Ascending aorta (tissue), 2 donors: ENCODE measurements at regions of chr14 and their contacts with region 1.

Region 1: DNA sequence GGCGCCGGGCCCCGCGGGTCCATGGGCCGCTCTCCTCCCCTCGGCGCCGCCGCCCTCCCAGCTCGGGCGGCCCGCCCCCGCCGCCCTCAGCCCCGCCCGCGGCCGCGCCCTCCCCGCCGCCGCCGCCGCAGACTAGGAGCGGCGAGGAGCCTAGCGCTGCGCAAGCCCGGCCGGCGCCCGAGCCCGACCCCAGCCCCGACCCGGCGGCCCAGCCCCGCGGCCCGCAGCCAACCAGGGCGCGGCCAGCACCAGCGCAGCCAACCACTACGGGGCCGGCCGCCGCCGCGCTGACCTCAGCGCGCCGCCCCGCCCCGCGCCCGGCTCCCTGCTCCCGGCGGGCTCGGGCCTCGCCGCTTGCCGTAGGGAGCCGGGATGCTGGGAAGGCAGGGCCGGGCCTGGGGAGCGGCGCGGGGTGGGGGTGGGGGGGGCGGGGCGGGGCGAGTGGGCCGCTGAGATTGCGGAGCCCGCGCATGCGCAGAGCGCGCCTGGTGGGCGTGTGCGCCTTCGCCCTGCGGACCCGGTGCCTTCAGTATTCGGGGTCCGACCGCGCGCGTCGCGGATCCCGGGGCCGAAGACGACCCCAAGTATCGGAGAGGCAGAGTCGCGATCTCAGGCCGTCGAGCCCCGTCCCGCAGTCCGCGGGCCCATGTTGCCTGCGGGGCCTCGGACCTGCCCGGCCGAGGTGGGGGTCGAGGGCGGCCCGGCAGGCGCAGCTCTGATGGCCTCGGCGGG is at the start of gene CDC42BPB:
- DNase-seq: peak; percentile 38 to 93
- H3K4me3 ChIP-seq: peak within 1 kb of the TSS; percentile 75 to 98
- H3K27ac ChIP-seq: peak within 1 kb of the TSS; percentile 92 to 93
- H3K4me1 ChIP-seq: peaks cover 6 to 20% of the 10 kb centered on the region in 2 donors
- H3K27me3 ChIP-seq: no peaks in the 10 kb centered on the region
- CTCF ChIP-seq: no peak
- total RNA-seq, gene CDC42BPB: 96.5 TPM

Region 2: GRCh38 chr14:102474934-102475333 is 582.6 kb before region 1 on chr14:
- intact Hi-C with region 1: no loop called
- DNase-seq: no peak
- H3K4me3 ChIP-seq: no peak overlapping the region
- H3K27ac ChIP-seq: no peak overlapping the region
- H3K4me1 ChIP-seq: peaks cover 0 to 3% of the 10 kb centered on the region in 2 donors
- H3K27me3 ChIP-seq: no peaks in the 10 kb centered on the region
- CTCF ChIP-seq: no peak

Region 3: GRCh38 chr14:102591889-102592763 is 465.4 kb before region 1 on chr14 and contains the start of gene RCOR1:
- intact Hi-C with region 1: loop called (anchors 5 kb)
- DNase-seq: peak; percentile 93 to 99
- H3K4me3 ChIP-seq: peak within 1 kb of the TSS; percentile 68 to 83
- H3K27ac ChIP-seq: peak within 1 kb of the TSS; percentile 94 to 98
- H3K4me1 ChIP-seq: peaks cover 8 to 12% of the 10 kb centered on the region in 2 donors
- H3K27me3 ChIP-seq: no peaks in the 10 kb centered on the region
- CTCF ChIP-seq: no peak
- total RNA-seq, gene RCOR1: 4.7 TPM

Region 4: DNA sequence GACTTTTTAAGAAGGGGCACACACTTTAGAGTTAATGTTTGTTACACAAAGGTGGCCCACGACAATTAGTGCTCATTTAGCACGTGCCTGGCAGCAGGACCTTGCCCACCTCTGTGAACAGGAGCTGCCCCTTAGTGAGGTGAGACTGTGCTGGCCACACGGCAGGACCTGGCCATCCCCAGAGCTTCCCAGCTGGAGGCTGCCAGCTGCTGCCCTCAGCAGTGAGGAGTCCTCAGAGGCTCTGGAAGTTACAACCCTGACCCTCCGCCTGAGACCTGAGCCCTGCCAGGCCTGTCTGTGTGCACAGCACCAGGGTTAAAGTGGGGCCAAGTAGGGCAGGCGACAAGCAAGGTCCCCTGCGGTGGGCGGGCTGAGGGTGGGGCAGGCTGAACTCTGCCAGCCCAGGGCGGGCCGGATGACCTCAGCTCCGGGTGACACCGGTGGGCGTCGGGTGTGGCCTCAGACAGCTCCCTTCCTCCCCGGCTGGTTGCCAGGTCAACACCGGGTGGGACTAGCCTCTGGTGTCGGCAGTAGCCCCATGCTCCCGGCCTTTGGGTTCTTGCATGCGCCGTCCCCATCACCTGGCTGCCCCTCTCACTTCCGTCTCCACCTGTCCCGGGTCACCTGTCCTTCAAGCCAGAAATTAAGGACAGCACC is 17.3 kb after region 1 on chr14:
- intact Hi-C with region 1: loop called (anchors 1 kb)
- DNase-seq: peak in 1 of 2 donors; percentile 80
- H3K4me3 ChIP-seq: peak overlapping the region; percentile 47 to 68
- H3K27ac ChIP-seq: peak overlapping the region; percentile 38 to 54
- H3K4me1 ChIP-seq: peaks cover 3 to 5% of the 10 kb centered on the region in 2 donors
- H3K27me3 ChIP-seq: no peaks in the 10 kb centered on the region
- CTCF ChIP-seq: no peak